Naive thymus-derived CD4-positive, alpha-beta T cell (primary cell): ENCODE measurements at regions of chr14 and their contacts with region 1.

Region 1: GRCh38 chr14:74493343-74494261 is at the start of gene ISCA2:
- DNase-seq: peak; percentile 95 to 99 (median 98)
- ATAC-seq: peak; percentile 94
- H3K4me3 ChIP-seq: peak within 1 kb of the TSS; percentile 96
- H3K4me3 Mint-ChIP-seq: peak within 1 kb of the TSS in 1 of 10 donors; percentile 89
- H3K27ac ChIP-seq: peak within 1 kb of the TSS; percentile 91
- H3K27ac Mint-ChIP-seq: peak within 1 kb of the TSS in 7 of 9 donors; percentile 87 to 96 (median 91)
- H3K4me1 ChIP-seq: peaks cover 12 to 18% of the 10 kb centered on the region in 2 donors
- H3K4me1 Mint-ChIP-seq: peaks cover 7 to 45% (median 37%) of the 10 kb centered on the region in 7 donors
- H3K27me3 ChIP-seq: no peaks in the 10 kb centered on the region
- H3K27me3 Mint-ChIP-seq: no peaks in the 10 kb centered on the region
- total RNA-seq, gene ISCA2: 13.9 to 39.5 (median 25.2) TPM

Region 2: GRCh38 chr14:73136387-73137225 is 1357.0 kb before region 1 on chr14 and contains the start of gene PSEN1:
- CTCF ChIA-PET with region 1: no interaction called
- POLR2A ChIA-PET with region 1: no interaction called
- intact Hi-C with region 1: loop called in 1 of 2 experiments (anchors 1 kb)
- DNase-seq: peak; percentile 97 to 100 (median 98)
- ATAC-seq: peak; percentile 96
- H3K4me3 ChIP-seq: peak within 1 kb of the TSS; percentile 93
- H3K4me3 Mint-ChIP-seq: peak within 1 kb of the TSS; percentile 82 to 99 (median 91)
- H3K27ac ChIP-seq: peak within 1 kb of the TSS; percentile 98
- H3K27ac Mint-ChIP-seq: peak within 1 kb of the TSS; percentile 71 to 99 (median 96)
- H3K4me1 ChIP-seq: peaks cover 7 to 17% of the 10 kb centered on the region in 2 donors
- H3K4me1 Mint-ChIP-seq: peaks cover 17 to 39% (median 36%) of the 10 kb centered on the region in 7 donors
- H3K27me3 ChIP-seq: no peaks in the 10 kb centered on the region
- H3K27me3 Mint-ChIP-seq: no peaks in the 10 kb centered on the region
- total RNA-seq, gene PSEN1: 32.7 to 55.8 (median 49.3) TPM

Region 3: DNA sequence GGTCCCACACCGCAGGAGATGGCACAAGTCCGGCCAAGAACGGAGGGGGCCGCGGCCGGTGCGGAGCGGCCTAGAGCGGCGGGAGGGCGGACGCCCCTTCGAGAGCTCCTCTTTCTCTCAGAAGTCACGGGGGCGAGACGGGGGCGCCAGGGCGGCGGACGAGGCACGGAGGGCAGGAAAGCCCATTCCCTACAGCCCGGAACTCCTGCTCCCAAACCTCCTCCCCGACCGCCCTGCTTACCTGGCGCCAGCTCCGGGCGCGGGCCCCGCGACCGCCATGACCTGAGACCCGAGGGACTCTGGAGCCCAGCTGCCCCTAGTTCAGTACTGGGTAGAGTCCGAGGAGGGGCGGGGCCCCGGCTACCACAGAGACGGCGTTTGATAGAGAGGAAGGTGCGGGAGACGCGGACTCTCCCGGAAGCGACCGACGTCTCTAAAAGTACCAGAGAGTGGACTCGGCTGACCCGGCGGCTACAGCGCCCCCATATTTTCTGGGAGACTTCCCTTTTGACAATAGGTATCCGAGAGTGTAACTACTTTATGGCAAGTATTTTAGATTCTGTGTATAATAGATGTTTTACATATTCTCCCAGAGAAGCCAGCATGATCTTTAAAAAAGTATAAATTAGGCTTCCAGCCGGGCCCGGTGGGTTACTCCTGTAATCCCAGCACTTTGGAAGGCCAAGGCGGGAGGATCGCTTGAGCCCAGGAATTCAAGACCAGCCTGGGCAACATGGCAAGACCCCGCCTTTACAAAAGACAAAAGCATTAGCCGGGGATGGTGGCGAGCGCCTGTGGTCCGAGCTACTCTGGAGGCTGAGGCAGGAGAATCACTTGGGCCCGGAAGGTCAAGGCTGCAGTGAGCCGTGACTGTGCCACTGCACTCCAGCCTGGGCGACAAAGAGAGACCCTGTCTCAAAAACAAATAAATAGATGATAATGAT is 190.7 kb before region 1 on chr14 and contains the start of gene ABCD4:
- CTCF ChIA-PET with region 1: no interaction called
- POLR2A ChIA-PET with region 1: interaction called, 3 read pairs
- intact Hi-C with region 1: loop called (anchors 1 to 2 kb)
- DNase-seq: peak; percentile 50 to 85 (median 65)
- ATAC-seq: peak; percentile 95
- H3K4me3 ChIP-seq: peak within 1 kb of the TSS; percentile 87
- H3K4me3 Mint-ChIP-seq: peak within 1 kb of the TSS; percentile 90 to 100 (median 96)
- H3K27ac ChIP-seq: peak within 1 kb of the TSS; percentile 77
- H3K27ac Mint-ChIP-seq: peak within 1 kb of the TSS; percentile 81 to 99 (median 96)
- H3K4me1 ChIP-seq: peaks cover 17 to 19% of the 10 kb centered on the region in 2 donors
- H3K4me1 Mint-ChIP-seq: peaks cover 18 to 49% (median 33%) of the 10 kb centered on the region in 7 donors
- H3K27me3 ChIP-seq: no peaks in the 10 kb centered on the region
- H3K27me3 Mint-ChIP-seq: no peaks in the 10 kb centered on the region
- total RNA-seq, gene ABCD4: 57.6 to 109 (median 68.2) TPM

Region 4: DNA sequence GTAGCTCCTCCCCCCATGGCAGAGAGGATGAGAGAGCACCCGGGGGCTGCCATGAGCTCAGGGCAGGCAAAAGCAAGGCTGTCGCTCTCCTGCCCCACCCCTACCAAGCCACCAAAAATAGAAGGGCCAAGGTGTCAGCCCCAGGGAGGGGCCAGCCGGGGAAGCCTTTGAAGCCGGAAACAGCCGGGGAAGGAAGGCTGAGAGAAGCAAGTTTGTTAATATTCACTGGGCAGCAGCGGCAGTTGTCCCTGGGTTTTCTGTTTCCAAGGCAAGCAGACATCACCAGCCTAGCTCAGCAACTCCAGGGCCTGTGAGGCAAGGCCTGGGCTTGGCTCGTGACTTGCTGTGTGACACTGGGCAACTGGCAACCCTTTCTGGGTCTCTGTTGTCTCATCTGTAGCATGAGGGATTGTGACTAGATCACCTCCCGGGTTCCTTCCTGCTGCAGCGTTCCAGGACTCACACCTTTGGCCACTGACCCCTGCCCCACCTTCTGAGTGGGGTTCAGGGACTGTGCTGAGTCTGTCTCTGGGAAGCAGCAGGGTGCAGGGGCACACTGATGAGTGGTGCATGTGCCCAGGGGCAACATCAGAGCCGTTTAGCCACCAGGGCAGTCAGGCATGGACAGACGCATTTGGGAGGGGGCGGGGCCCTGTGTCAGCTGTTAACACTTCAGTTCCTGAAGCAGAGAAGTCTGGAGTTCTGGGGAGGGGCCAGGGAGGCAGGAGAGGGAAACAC is 91.9 kb before region 1 on chr14:
- CTCF ChIA-PET with region 1: no interaction called
- POLR2A ChIA-PET with region 1: no interaction called
- intact Hi-C with region 1: loop called (anchors 2 kb)
- DNase-seq: peak; percentile 15 to 61 (median 51)
- ATAC-seq: peak; percentile 94
- H3K4me3 ChIP-seq: peak overlapping the region; percentile 50
- H3K4me3 Mint-ChIP-seq: peak overlapping the region; percentile 66 to 85 (median 74)
- H3K27ac ChIP-seq: peak overlapping the region; percentile 55
- H3K27ac Mint-ChIP-seq: peak overlapping the region; percentile 33 to 88 (median 73)
- H3K4me1 ChIP-seq: peaks cover 14 to 25% of the 10 kb centered on the region in 2 donors
- H3K4me1 Mint-ChIP-seq: peaks cover 13 to 31% (median 24%) of the 10 kb centered on the region in 7 donors
- H3K27me3 ChIP-seq: no peaks in the 10 kb centered on the region
- H3K27me3 Mint-ChIP-seq: peaks cover 0 to 15% (median 0%) of the 10 kb centered on the region in 5 donors

Region 5: GRCh38 chr14:74612350-74613021 is 118.9 kb after region 1 on chr14:
- CTCF ChIA-PET with region 1: no interaction called
- POLR2A ChIA-PET with region 1: no interaction called
- intact Hi-C with region 1: loop called in 1 of 2 experiments (anchors 1 kb)
- DNase-seq: peak; percentile 70 to 97 (median 87)
- ATAC-seq: peak; percentile 95
- H3K4me3 ChIP-seq: peak overlapping the region; percentile 72
- H3K4me3 Mint-ChIP-seq: peak overlapping the region; percentile 60 to 84 (median 78)
- H3K27ac ChIP-seq: peak overlapping the region; percentile 17
- H3K27ac Mint-ChIP-seq: peak overlapping the region in 1 of 9 donors; percentile 46
- H3K4me1 ChIP-seq: peaks cover 5 to 10% of the 10 kb centered on the region in 2 donors
- H3K4me1 Mint-ChIP-seq: peaks cover 23 to 46% (median 39%) of the 10 kb centered on the region in 7 donors
- H3K27me3 ChIP-seq: no peaks in the 10 kb centered on the region
- H3K27me3 Mint-ChIP-seq: peaks cover 0 to 55% (median 6%) of the 10 kb centered on the region in 5 donors

Region 6: DNA sequence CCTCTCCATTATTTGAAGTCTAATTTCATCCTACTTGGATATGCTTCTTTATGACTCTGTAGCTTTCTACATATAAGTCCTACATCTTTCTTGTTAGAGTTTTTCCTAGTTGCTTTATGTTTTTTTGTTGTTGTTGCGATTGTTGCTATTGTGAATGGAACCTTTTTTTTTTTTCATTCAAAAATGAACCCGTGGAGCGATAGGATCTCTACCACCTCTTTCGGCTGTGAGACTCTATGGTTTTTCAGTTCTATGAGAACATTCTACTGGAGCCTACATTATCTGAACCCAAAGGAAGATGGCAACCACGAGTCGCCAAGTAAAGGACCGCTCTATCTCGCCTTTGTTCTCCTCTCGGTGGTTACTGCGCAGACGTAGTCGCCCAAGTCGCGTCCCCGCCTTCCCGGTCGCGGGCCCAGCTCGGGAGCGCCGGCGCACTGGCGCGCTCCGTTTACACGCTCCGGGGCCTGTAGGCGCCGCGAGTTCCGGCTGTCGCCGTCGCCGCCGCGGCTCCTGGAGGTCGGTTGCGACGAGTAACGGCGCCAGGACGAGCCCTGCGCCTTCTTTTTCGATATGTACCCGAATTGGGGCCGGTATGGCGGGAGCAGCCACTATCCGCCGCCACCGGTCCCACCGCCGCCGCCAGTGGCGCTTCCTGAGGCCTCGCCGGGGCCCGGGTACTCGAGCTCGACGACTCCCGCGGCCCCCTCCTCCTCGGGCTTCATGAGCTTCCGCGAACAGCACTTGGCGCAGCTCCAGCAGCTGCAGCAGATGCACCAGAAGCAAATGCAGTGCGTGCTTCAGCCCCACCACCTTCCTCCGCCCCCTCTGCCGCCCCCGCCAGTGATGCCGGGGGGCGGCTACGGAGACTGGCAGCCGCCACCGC is 269.6 kb after region 1 on chr14 and contains the start of gene YLPM1:
- CTCF ChIA-PET with region 1: no interaction called
- POLR2A ChIA-PET with region 1: no interaction called
- intact Hi-C with region 1: loop called (anchors 1 to 2 kb)
- DNase-seq: peak; percentile 79 to 97 (median 95)
- ATAC-seq: peak; percentile 98
- H3K4me3 ChIP-seq: peak within 1 kb of the TSS; percentile 58
- H3K4me3 Mint-ChIP-seq: peak within 1 kb of the TSS; percentile 86 to 99 (median 95)
- H3K27ac ChIP-seq: peak within 1 kb of the TSS; percentile 93
- H3K27ac Mint-ChIP-seq: peak within 1 kb of the TSS; percentile 87 to 97 (median 95)
- H3K4me1 ChIP-seq: peaks cover 31 to 38% of the 10 kb centered on the region in 2 donors
- H3K4me1 Mint-ChIP-seq: peaks cover 43 to 56% (median 49%) of the 10 kb centered on the region in 7 donors
- H3K27me3 ChIP-seq: no peaks in the 10 kb centered on the region
- H3K27me3 Mint-ChIP-seq: peaks cover 0 to 2% (median 0%) of the 10 kb centered on the region in 5 donors
- total RNA-seq, gene YLPM1: 84.7 to 119 (median 109) TPM

Region 7: DNA sequence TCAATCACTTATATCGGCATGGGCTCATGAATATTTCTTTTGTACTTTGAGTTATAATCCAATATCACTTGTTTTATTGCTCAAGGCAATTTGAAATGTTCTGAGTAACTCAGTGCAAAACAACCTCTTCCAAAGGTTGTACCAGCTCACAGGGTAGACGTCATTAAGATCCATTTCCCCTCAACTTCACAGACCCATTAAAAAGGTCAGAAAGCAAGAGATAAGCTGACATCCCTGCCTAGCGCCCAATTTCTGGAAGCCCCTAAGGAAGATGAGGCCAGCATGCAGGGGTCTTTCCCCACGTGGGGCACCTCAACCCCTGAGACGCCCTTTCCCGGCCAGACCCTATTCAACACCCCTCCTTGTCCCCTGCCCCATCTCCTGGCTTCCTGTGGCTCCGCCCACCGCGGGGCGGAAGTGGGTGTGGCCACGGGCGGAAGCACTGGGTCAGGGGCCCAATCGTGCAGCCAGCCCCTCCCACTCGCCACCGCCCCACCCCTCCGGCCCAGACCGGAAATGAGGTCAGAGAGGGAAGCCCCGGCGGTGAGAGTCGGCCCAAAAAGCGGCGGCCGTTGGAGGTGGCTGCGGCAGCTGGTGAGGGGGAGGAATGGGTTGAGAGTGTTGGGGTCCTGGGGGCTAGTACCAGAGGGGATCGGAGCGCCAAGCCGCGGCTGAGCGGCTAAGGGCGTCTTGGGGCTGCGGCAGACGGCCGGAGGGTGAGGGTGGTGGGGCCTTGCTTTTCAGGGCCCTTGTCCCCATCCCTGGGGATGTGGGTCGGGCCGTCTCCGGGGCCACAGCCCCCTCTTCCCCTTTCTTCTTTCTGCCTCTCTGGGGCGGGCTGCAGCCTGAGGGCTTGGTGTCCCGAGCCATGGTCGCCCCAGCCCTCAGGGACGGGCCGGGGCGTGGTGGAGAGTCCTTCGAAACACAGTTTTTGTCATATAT is 1658.1 kb after region 1 on chr14 and contains the start of gene GPATCH2L:
- CTCF ChIA-PET with region 1: no interaction called
- POLR2A ChIA-PET with region 1: no interaction called
- intact Hi-C with region 1: loop called in 1 of 2 experiments (anchors 10 kb)
- DNase-seq: peak; percentile 90 to 98 (median 95)
- ATAC-seq: peak; percentile 96
- H3K4me3 ChIP-seq: peak within 1 kb of the TSS; percentile 91
- H3K4me3 Mint-ChIP-seq: peak within 1 kb of the TSS; percentile 89 to 98 (median 95)
- H3K27ac ChIP-seq: peak within 1 kb of the TSS; percentile 95
- H3K27ac Mint-ChIP-seq: peak within 1 kb of the TSS; percentile 86 to 98 (median 96)
- H3K4me1 ChIP-seq: peaks cover 40 to 44% of the 10 kb centered on the region in 2 donors
- H3K4me1 Mint-ChIP-seq: peaks cover 40 to 56% (median 53%) of the 10 kb centered on the region in 7 donors
- H3K27me3 ChIP-seq: no peaks in the 10 kb centered on the region
- H3K27me3 Mint-ChIP-seq: peaks cover 0 to 18% (median 0%) of the 10 kb centered on the region in 5 donors
- total RNA-seq, gene GPATCH2L: 60.4 to 83.1 (median 66.6) TPM